ENCODE measurements at regions of chr3 and their contacts with region 1.

Region 1: DNA sequence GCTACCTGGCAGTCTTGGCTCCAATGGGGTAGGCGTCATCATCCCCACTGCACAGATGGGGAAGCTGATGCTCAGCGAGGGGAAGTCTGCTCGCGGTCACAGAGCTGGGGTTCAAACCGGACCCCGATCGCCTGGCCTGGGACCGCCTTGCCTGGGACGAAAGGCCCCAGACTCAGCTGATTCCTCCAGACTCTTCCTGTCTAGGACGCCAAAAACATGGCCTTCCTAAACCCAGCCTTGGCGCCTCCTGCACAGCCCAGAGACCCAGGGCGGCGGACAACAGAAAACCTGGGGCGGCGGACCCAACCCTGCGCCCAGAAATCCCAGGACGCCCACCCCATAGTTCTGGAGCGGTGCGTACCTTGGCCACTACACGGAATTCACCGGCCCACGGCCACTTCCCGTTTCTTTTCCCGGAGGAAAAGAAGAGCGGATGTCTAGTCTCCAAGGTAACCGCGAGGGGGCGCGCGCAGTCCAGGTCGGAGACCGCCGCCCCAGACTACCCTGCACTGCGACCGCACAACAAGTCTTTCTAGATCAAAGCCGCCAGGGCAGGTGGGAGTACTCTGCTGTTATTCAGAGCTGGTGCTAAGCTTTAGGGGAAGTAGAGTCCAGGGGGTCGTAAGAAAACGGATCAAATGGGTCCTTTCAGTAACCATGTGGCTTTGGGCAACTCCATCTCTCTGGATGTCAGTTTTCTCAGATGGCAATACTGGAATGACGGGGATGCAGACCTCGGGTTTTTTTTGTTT is 4.9 kb upstream of the IL17RD start:
- DNase-seq: peak; percentile 90
- H3K4me3 ChIP-seq: peak overlapping the region; percentile 49 to 60
- H3K27ac ChIP-seq: no peak overlapping the region
- H3K4me1 ChIP-seq: no peaks in the 10 kb centered on the region
- H3K27me3 ChIP-seq: no peaks in the 10 kb centered on the region
- CTCF ChIP-seq: peak; percentile 65 to 89 (median 70)
- POLR2A ChIP-seq: no peak

Region 2: GRCh38 chr3:57100046-57100695 is 69.9 kb before region 1 on chr3:
- intact Hi-C with region 1: loop called (anchors 10 kb)
- DNase-seq: peak; percentile 90
- H3K4me3 ChIP-seq: no peak overlapping the region
- H3K27ac ChIP-seq: no peak overlapping the region
- H3K4me1 ChIP-seq: no peaks in the 10 kb centered on the region
- H3K27me3 ChIP-seq: no peaks in the 10 kb centered on the region
- CTCF ChIP-seq: peak; percentile 85 to 96 (median 86)
- POLR2A ChIP-seq: no peak

Region 3: DNA sequence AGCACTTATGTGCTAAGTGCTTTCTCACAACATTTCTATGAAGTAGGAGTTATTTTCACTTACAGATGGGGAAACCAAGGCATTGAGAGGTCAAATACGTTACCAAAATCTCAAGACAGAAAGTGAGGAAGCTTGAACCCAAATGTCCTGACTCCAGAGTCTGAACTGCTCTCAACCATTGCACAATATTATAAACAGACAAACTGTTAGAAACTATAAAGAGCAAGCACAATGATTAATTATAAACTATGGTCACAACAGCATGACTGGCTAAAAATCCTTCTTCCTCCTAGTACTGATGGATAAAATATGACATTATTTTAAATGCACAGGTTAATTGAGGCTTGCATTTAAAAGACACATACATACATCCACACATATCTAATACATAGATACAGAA is 200.3 kb after region 1 on chr3:
- intact Hi-C with region 1: no loop called
- DNase-seq: no peak
- H3K4me3 ChIP-seq: no peak overlapping the region
- H3K27ac ChIP-seq: no peak overlapping the region
- H3K4me1 ChIP-seq: no peaks in the 10 kb centered on the region
- H3K27me3 ChIP-seq: no peaks in the 10 kb centered on the region
- CTCF ChIP-seq: no peak
- POLR2A ChIP-seq: no peak

Measured in testis (tissue), 5 donors.